ENCODE measurements at regions of chr17 and their contacts with region 1.

Region 1: DNA sequence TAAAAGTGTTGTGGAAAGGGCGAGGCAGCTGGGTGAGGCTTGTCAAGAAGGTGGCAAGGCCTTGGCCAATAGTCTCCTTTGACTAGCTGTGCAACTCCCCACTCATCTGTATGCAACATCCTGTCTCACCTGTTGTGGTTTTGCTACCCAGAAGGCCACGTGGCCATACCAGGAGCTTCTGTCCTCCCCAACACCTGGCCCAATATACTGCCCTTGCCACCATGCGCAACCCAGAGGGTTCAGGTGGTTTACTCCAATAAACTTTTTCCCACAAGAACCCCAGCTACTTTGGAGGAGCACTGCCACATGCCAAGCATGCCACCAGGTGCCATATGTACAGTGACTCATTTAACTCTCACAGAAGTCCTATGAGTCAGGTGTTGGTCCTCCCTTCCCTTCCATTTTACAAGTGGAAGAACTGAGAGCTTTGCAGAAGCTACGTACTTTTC is 10.2 kb downstream of the MYO19 start:
- DNase-seq: no peak
- H3K4me3 Mint-ChIP-seq: no peak overlapping the region
- H3K27ac Mint-ChIP-seq: no peak overlapping the region
- H3K4me1 Mint-ChIP-seq: peaks cover 15% of the 10 kb centered on the region
- H3K27me3 Mint-ChIP-seq: no peaks in the 10 kb centered on the region
- CTCF ChIP-seq: no peak

Region 2: GRCh38 chr17:36534840-36535668 is 10.6 kb after region 1 on chr17 and contains the starts of genes MYO19 and PIGW:
- CTCF ChIA-PET with region 1: interaction called, 16 read pairs
- intact Hi-C with region 1: no loop called
- DNase-seq: peak; percentile 100
- H3K4me3 Mint-ChIP-seq: peak within 1 kb of the TSS; percentile 99
- H3K27ac Mint-ChIP-seq: peak within 1 kb of the TSS; percentile 93
- H3K4me1 Mint-ChIP-seq: peaks cover 23% of the 10 kb centered on the region
- H3K27me3 Mint-ChIP-seq: no peaks in the 10 kb centered on the region
- CTCF ChIP-seq: peak; percentile 62
- total RNA-seq, gene MYO19: 155 and 156 TPM in 2 replicates
- total RNA-seq, gene PIGW: 71.1 and 78.9 TPM in 2 replicates

Region 3: GRCh38 chr17:36608794-36609497 is 84.5 kb after region 1 on chr17:
- CTCF ChIA-PET with region 1: no interaction called
- intact Hi-C with region 1: no loop called
- DNase-seq: peak; percentile 66
- H3K4me3 Mint-ChIP-seq: no peak overlapping the region
- H3K27ac Mint-ChIP-seq: no peak overlapping the region
- H3K4me1 Mint-ChIP-seq: peaks cover 21% of the 10 kb centered on the region
- H3K27me3 Mint-ChIP-seq: no peaks in the 10 kb centered on the region
- CTCF ChIP-seq: peak; percentile 68